ENCODE measurements at regions of chr6 and their contacts with region 1.

Region 1: DNA sequence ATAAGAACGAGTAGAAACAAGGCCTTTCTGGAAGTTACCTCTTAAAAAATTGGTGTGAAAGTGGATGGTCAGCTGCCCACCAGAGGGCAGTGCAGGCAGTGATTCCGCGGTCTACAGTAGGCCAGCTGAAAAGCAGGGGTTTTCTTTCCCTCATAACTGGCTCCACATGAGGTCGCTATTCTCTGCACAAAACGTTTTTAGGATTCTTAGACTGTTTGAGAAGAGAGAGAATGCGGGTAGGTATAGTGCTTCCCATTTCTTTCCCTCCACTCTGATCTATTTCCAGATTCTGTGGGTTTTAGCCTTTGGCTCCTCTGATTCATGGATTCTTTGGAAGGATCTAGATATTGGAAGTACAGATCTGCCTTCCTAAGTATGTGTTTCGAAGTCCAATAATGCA is 14.2 kb downstream of the FIG4 start:
- DNase-seq: peak; percentile 78
- ATAC-seq: peak; percentile 92 to 96
- H3K4me3 ChIP-seq: no peak overlapping the region
- H3K27ac ChIP-seq: no peak overlapping the region
- H3K4me1 ChIP-seq: peaks cover 33% of the 10 kb centered on the region
- H3K27me3 ChIP-seq: no peaks in the 10 kb centered on the region
- CTCF ChIP-seq: peak; percentile 96

Region 2: GRCh38 chr6:109229536-109229935 is 475.7 kb before region 1 on chr6:
- intact Hi-C with region 1: no loop called
- DNase-seq: no peak
- ATAC-seq: no peak
- H3K4me3 ChIP-seq: no peak overlapping the region
- H3K27ac ChIP-seq: no peak overlapping the region
- H3K4me1 ChIP-seq: peaks cover 6% of the 10 kb centered on the region
- H3K27me3 ChIP-seq: no peaks in the 10 kb centered on the region
- CTCF ChIP-seq: no peak

Region 3: DNA sequence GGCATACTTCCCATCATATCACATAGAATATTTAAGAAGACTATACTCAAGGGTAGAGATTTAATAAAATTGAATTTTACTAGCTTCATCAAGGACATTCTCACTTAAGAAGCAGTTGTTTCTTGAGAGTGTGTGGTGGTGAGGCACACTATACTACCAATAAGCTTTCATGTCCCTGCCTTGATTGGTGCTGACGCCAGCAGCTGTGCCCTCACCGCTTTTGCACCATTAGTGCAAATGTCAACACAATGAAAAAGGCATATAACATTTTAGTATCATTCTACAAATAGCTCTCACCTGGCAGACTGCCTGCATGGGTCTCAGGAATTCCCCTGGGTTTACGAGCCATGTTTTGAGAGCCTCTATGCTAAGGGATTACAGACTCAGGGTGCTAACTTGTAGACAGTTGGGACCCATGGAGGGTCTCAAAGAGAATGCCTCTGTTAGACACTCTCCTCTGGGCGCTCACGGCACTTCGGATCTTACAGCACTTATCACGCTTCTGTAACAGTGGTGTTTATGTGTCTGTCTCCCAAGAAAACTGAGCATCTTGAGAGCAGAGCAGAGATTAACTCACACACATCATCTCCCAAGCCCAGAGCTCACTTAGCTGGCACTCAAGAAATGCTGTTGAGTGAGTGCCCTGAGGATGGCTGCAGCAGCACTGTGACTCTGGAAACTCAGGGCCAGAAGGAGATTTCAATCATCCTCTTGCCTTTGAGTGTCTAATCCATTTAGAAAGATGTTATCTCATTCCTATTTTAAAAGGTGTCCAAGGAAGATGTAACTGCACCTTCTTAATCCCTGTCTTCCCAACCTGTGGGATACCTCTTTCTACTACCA is 129.6 kb after region 1 on chr6:
- intact Hi-C with region 1: no loop called
- DNase-seq: no peak
- ATAC-seq: no peak
- H3K4me3 ChIP-seq: no peak overlapping the region
- H3K27ac ChIP-seq: no peak overlapping the region
- H3K4me1 ChIP-seq: no peaks in the 10 kb centered on the region
- H3K27me3 ChIP-seq: no peaks in the 10 kb centered on the region
- CTCF ChIP-seq: no peak

Region 4: DNA sequence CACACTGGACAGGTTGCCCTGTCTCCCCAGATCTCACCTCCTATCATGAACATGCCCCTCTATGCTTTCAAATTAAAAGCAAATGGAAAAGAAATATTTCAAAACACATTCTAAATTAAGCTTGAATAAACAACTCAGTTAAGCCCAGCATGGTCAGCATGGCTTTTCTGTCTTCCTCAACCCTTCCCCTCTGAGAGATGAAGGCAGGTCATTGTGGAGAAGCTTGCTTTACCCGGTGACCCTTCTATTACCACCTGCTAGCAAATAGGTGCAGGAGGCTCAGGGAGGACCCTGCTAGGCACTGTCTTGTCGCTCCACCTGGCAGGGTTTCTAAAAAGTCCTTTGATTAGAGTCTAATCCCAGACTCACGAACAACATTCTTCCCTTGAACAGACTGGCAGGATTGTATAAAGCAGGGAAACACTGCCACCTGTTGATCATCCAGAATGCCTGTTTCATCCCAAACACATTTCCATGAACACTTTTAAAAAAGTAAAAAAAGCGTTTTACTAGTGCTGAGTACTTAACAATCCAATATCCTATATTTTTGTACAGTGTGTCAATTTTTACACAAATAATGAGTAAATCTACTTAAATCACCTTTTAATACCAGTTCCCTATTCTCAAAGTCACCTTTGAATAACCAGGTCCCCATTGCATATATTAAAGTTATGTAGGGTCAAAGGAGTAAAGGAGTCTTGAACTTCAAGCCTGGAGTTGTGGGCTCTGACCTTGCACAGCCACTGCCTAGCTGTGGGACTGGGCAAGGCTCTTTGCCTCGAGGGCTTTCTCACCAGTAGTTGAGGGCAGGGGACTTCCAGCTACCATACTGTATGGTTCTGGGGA is 348.4 kb after region 1 on chr6:
- intact Hi-C with region 1: loop called (anchors 10 kb)
- DNase-seq: no peak
- ATAC-seq: peak; percentile 63 to 73
- H3K4me3 ChIP-seq: no peak overlapping the region
- H3K27ac ChIP-seq: no peak overlapping the region
- H3K4me1 ChIP-seq: no peaks in the 10 kb centered on the region
- H3K27me3 ChIP-seq: no peaks in the 10 kb centered on the region
- CTCF ChIP-seq: peak; percentile 74

Region 5: DNA sequence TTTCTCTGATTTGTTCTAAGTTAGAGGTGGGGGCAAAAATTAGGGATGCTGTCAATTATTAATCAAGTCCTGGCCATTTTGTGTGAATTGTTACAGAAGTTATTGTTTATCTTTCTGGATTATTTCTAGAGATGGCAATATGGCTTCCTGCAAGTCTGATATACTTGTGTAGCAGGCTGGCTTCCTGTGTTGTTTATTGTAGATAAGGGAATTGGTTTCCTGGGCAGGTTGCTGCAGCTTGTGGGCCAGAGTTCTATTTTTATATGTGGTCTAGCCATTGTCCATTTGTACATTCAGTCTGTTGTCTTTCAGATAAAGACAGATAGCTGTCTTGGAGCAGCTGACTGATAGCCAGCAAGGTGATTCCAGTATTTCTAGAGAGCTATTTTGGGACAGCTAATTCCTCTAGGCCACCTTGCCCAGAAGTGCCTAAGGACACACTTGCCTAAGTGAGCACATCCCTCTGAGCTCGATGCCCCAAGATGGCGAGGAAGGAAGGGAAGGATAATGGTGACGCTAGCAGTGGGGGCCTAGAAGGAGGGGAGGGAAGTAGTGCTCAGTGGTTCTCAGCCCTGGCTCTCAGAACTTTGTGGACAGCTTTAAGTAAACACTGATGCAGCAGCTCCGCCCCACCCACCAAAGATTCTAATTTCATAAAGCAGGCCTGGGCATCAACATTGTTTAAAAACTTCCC is 684.6 kb after region 1 on chr6:
- intact Hi-C with region 1: loop called (anchors 10 kb)
- DNase-seq: no peak
- ATAC-seq: no peak
- H3K4me3 ChIP-seq: no peak overlapping the region
- H3K27ac ChIP-seq: no peak overlapping the region
- H3K4me1 ChIP-seq: peaks cover 9% of the 10 kb centered on the region
- H3K27me3 ChIP-seq: no peaks in the 10 kb centered on the region
- CTCF ChIP-seq: no peak